CD8-positive, alpha-beta T cell (primary cell): ENCODE measurements at regions of chr6 and their contacts with region 1.

Region 1: DNA sequence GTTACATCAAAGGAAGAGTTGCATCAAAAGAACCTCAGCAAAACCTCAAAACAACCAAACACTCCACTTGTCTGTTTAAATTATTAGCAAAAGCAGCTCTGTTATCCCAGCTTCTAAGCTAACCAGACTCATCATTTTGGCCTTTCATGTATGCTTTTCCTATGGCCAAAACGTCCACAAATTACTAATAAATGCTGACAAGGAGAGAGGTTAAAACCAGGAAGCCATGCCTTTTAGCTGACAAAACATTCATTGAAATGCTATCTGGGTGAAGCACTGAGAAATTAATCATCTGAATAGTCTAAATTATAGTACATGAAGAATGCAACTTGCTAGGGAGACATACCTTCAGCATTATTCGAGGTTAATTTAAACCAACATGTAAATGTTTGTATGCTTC is 80.6 kb downstream of the LAMA2 start:
- DNase-seq: no peak
- ATAC-seq: no peak
- H3K4me3 ChIP-seq: no peak overlapping the region
- H3K4me3 Mint-ChIP-seq: no peak overlapping the region
- H3K27ac ChIP-seq: no peak overlapping the region
- H3K27ac Mint-ChIP-seq: no peak overlapping the region
- H3K4me1 ChIP-seq: no peaks in the 10 kb centered on the region
- H3K4me1 Mint-ChIP-seq: no peaks in the 10 kb centered on the region
- H3K27me3 ChIP-seq: no peaks in the 10 kb centered on the region
- H3K27me3 Mint-ChIP-seq: peaks cover 10% of the 10 kb centered on the region
- CTCF ChIP-seq: no peak

Region 2: GRCh38 chr6:128655978-128656498 is 307.5 kb before region 1 on chr6:
- CTCF ChIA-PET with region 1: no interaction called
- POLR2A ChIA-PET with region 1: no interaction called
- intact Hi-C with region 1: no loop called
- DNase-seq: no peak
- ATAC-seq: no peak
- H3K4me3 ChIP-seq: no peak overlapping the region
- H3K4me3 Mint-ChIP-seq: no peak overlapping the region
- H3K27ac ChIP-seq: no peak overlapping the region
- H3K27ac Mint-ChIP-seq: no peak overlapping the region
- H3K4me1 ChIP-seq: no peaks in the 10 kb centered on the region
- H3K4me1 Mint-ChIP-seq: no peaks in the 10 kb centered on the region
- H3K27me3 ChIP-seq: no peaks in the 10 kb centered on the region
- H3K27me3 Mint-ChIP-seq: peaks cover 3% of the 10 kb centered on the region
- CTCF ChIP-seq: no peak

Region 3: GRCh38 chr6:128919412-128920180 is 44.0 kb before region 1 on chr6:
- CTCF ChIA-PET with region 1: no interaction called
- POLR2A ChIA-PET with region 1: no interaction called
- intact Hi-C with region 1: loop called in 1 of 2 experiments (anchors 1 kb)
- DNase-seq: no peak
- ATAC-seq: no peak
- H3K4me3 ChIP-seq: no peak overlapping the region
- H3K4me3 Mint-ChIP-seq: no peak overlapping the region
- H3K27ac ChIP-seq: no peak overlapping the region
- H3K27ac Mint-ChIP-seq: no peak overlapping the region
- H3K4me1 ChIP-seq: no peaks in the 10 kb centered on the region
- H3K4me1 Mint-ChIP-seq: no peaks in the 10 kb centered on the region
- H3K27me3 ChIP-seq: no peaks in the 10 kb centered on the region
- H3K27me3 Mint-ChIP-seq: no peaks in the 10 kb centered on the region
- CTCF ChIP-seq: no peak

Region 4: GRCh38 chr6:128997880-128998279 is 34.3 kb after region 1 on chr6:
- CTCF ChIA-PET with region 1: no interaction called
- POLR2A ChIA-PET with region 1: no interaction called
- intact Hi-C with region 1: no loop called
- DNase-seq: no peak
- ATAC-seq: no peak
- H3K4me3 ChIP-seq: no peak overlapping the region
- H3K4me3 Mint-ChIP-seq: no peak overlapping the region
- H3K27ac ChIP-seq: no peak overlapping the region
- H3K27ac Mint-ChIP-seq: no peak overlapping the region
- H3K4me1 ChIP-seq: no peaks in the 10 kb centered on the region
- H3K4me1 Mint-ChIP-seq: no peaks in the 10 kb centered on the region
- H3K27me3 ChIP-seq: no peaks in the 10 kb centered on the region
- H3K27me3 Mint-ChIP-seq: peaks cover 3% of the 10 kb centered on the region
- CTCF ChIP-seq: no peak

Region 5: GRCh38 chr6:129009851-129010250 is 46.3 kb after region 1 on chr6:
- CTCF ChIA-PET with region 1: no interaction called
- POLR2A ChIA-PET with region 1: no interaction called
- intact Hi-C with region 1: no loop called
- DNase-seq: no peak
- ATAC-seq: no peak
- H3K4me3 ChIP-seq: no peak overlapping the region
- H3K4me3 Mint-ChIP-seq: no peak overlapping the region
- H3K27ac ChIP-seq: no peak overlapping the region
- H3K27ac Mint-ChIP-seq: no peak overlapping the region
- H3K4me1 ChIP-seq: no peaks in the 10 kb centered on the region
- H3K4me1 Mint-ChIP-seq: no peaks in the 10 kb centered on the region
- H3K27me3 ChIP-seq: no peaks in the 10 kb centered on the region
- H3K27me3 Mint-ChIP-seq: no peaks in the 10 kb centered on the region
- CTCF ChIP-seq: no peak